Adrenal gland (tissue), 19 donors: ENCODE measurements at regions of chr7 and their contacts with region 1.

Region 1: GRCh38 chr7:116809636-116810266 is 52.6 kb upstream of the CAPZA2 start:
- DNase-seq: peak in 4 of 7 donors; percentile 16 to 30 (median 20)
- H3K4me3 ChIP-seq: no peak overlapping the region
- H3K27ac ChIP-seq: no peak overlapping the region
- H3K4me1 ChIP-seq: no peaks in the 10 kb centered on the region
- H3K27me3 ChIP-seq: no peaks in the 10 kb centered on the region
- CTCF ChIP-seq: peak; percentile 33 to 72 (median 64)
- POLR2A ChIP-seq: no peak

Region 2: GRCh38 chr7:116173051-116174028 is 636.4 kb before region 1 on chr7:
- intact Hi-C with region 1: loop called in 1 of 2 experiments (anchors 10 kb)
- DNase-seq: peak in 1 of 7 donors; percentile 12
- H3K4me3 ChIP-seq: no peak overlapping the region
- H3K27ac ChIP-seq: no peak overlapping the region
- H3K4me1 ChIP-seq: no peaks in the 10 kb centered on the region
- H3K27me3 ChIP-seq: no peaks in the 10 kb centered on the region
- CTCF ChIP-seq: peak; percentile 36 to 77 (median 66)
- POLR2A ChIP-seq: no peak

Region 3: GRCh38 chr7:116258734-116259133 is 551.0 kb before region 1 on chr7:
- intact Hi-C with region 1: loop called (anchors 5 to 10 kb)
- DNase-seq: peak in 6 of 7 donors; percentile 19 to 45 (median 28)
- H3K4me3 ChIP-seq: no peak overlapping the region
- H3K27ac ChIP-seq: no peak overlapping the region
- H3K4me1 ChIP-seq: peaks cover 0 to 3% of the 10 kb centered on the region in 2 donors
- H3K27me3 ChIP-seq: no peaks in the 10 kb centered on the region
- CTCF ChIP-seq: peak; percentile 74 to 91 (median 87)
- POLR2A ChIP-seq: no peak

Region 4: DNA sequence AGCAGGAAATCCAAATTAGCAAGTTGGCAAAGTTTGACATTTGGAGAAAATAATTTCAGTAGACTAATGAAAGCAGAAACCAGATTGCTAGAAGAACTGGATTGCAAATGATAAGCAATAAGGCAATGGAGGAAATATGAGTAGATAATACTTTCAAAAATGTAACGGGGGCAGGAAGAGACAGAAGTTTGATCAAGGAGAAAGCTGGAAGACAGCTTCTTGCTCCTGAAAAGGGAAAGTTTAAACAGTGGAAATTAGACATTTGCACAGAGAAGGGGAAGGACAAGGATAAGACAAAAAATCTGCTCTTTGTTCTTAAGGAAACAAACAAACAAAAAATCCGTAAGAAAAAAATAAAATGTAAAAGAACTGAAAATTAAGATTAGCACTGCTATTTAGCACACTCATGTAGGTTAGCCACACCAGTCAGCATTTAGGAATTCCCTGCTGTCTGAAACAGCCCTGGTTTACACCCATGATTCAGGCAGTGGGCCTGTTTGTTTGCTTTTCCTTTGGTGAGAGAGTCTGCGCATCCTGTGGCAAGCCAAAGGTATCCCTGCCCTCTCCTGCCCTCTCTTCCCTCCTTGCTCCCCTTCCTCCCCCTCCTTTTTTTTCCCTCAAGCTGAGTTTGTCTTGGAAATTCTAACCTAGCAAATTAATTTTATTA is 414.5 kb before region 1 on chr7:
- intact Hi-C with region 1: no loop called
- DNase-seq: no peak
- H3K4me3 ChIP-seq: no peak overlapping the region
- H3K27ac ChIP-seq: no peak overlapping the region
- H3K4me1 ChIP-seq: no peaks in the 10 kb centered on the region
- H3K27me3 ChIP-seq: no peaks in the 10 kb centered on the region
- CTCF ChIP-seq: no peak
- POLR2A ChIP-seq: no peak

Region 5: GRCh38 chr7:116588641-116589594 is 220.8 kb before region 1 on chr7:
- intact Hi-C with region 1: loop called in 1 of 2 experiments (anchors 5 kb)
- DNase-seq: no peak
- H3K4me3 ChIP-seq: no peak overlapping the region
- H3K27ac ChIP-seq: no peak overlapping the region
- H3K4me1 ChIP-seq: peaks cover 3 to 6% of the 10 kb centered on the region in 2 donors
- H3K27me3 ChIP-seq: no peaks in the 10 kb centered on the region
- CTCF ChIP-seq: peak; percentile 65 to 87 (median 79)
- POLR2A ChIP-seq: no peak

Region 6: GRCh38 chr7:116598278-116598677 is 211.5 kb before region 1 on chr7:
- intact Hi-C with region 1: loop called (anchors 5 kb)
- DNase-seq: no peak
- H3K4me3 ChIP-seq: no peak overlapping the region
- H3K27ac ChIP-seq: no peak overlapping the region
- H3K4me1 ChIP-seq: no peaks in the 10 kb centered on the region
- H3K27me3 ChIP-seq: no peaks in the 10 kb centered on the region
- CTCF ChIP-seq: no peak
- POLR2A ChIP-seq: no peak